Heart left ventricle (tissue), 16 donors: ENCODE measurements at regions of chr9 and their contacts with region 1.

Region 1: DNA sequence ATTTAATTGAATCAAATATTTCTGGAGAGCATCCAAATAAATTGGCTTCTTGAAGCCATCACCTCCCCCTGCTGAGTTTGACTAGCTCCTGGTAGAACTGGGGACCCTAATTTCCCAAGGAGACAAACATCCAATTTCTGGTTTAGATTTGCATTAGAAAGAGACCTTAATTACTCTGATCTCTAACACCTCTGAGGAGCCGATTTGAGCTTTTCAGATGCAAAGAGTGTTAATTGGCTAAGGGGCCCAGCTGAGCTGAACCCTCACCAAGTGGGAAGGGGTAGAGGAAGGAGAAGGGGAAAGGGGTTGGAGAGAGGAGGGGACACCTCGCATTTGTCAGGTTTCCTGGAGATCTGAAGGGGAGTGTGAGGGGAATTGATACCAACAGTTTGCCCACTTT is 145.4 kb upstream of the SHB start:
- DNase-seq: no peak
- ATAC-seq: no peak
- H3K4me3 ChIP-seq: no peak overlapping the region
- H3K27ac ChIP-seq: no peak overlapping the region
- H3K4me1 ChIP-seq: no peaks in the 10 kb centered on the region
- H3K27me3 ChIP-seq: peaks cover 0 to 3% (median 0%) of the 10 kb centered on the region in 9 donors
- CTCF ChIP-seq: no peak
- POLR2A ChIP-seq: no peak

Region 2: DNA sequence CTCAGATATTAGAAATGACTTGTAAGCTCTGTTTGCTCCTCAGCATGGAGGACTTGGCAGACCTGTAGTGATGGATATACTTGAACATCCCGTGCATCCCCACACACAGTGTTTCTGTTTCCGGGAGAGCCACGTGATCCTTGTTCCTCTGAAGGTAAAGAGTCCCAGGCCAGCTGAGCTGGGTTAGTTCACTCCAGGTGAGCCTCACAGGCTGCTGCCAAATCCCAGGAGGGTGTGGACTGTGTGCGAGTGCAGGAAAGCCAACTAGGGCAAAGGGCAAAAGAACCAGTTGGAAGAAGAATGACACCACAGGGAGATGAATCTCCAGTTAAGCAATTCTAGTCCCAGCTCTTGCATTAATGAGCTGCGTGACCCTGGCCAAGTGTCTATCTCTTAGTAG is 611.6 kb before region 1 on chr9:
- intact Hi-C with region 1: no loop called
- DNase-seq: peak in 2 of 5 donors; percentile 50 to 65
- ATAC-seq: peak; percentile 47 to 93 (median 62)
- H3K4me3 ChIP-seq: no peak overlapping the region
- H3K27ac ChIP-seq: no peak overlapping the region
- H3K4me1 ChIP-seq: peaks cover 0 to 8% (median 0%) of the 10 kb centered on the region in 12 donors
- H3K27me3 ChIP-seq: peaks cover 0 to 6% (median 0%) of the 10 kb centered on the region in 9 donors
- CTCF ChIP-seq: no peak
- POLR2A ChIP-seq: no peak

Region 3: GRCh38 chr9:38127271-38127882 is 87.1 kb before region 1 on chr9:
- intact Hi-C with region 1: loop called in 1 of 10 experiments (anchors 10 kb)
- DNase-seq: no peak
- ATAC-seq: no peak
- H3K4me3 ChIP-seq: no peak overlapping the region
- H3K27ac ChIP-seq: no peak overlapping the region
- H3K4me1 ChIP-seq: no peaks in the 10 kb centered on the region
- H3K27me3 ChIP-seq: peaks cover 0 to 3% (median 0%) of the 10 kb centered on the region in 9 donors
- CTCF ChIP-seq: no peak
- POLR2A ChIP-seq: no peak